MCF 10A (cell line): ENCODE measurements at regions of chr20 and their contacts with region 1.

Region 1: DNA sequence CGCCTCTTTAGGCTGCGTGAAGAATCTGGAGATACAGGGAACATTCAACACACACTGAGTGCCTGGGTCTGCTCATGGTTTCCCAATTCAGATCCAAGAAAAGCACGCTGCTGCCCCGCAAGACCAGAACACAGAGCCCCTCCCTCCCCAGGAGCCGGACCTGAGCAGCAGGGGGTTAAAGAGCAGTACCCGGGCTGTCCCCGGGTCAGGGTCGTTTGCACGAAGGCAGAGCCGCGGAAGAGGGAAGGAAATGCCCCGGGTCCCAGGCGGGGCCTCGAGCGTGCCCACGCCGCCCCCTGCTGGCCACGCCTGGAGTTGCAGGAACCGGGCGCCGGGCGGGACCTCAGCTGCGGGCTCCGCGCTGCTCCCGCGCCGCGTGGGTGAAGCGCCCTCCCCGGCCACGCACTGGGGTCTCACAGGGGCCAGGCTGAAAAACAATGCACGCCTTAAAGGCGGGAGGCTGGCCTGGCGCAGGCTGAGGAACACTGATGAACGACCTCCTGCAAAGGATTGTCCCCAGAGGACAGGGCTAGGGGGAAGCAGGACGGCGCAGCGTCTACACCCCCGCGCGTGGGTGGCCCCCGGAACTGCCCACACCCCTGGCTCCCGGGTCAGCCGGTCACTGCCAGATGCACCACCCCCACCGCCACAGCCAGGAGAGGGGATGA is 48.9 kb downstream of the ANKRD60 start:
- DNase-seq: peak; percentile 40
- H3K4me3 Mint-ChIP-seq: no peak overlapping the region
- H3K27ac Mint-ChIP-seq: no peak overlapping the region
- H3K4me1 Mint-ChIP-seq: no peaks in the 10 kb centered on the region
- H3K27me3 Mint-ChIP-seq: peaks cover 32% of the 10 kb centered on the region
- CTCF ChIP-seq: peak; percentile 99

Region 2: GRCh38 chr20:57748601-57749130 is 430.9 kb before region 1 on chr20:
- CTCF ChIA-PET with region 1: no interaction called
- POLR2A ChIA-PET with region 1: no interaction called
- intact Hi-C with region 1: no loop called
- DNase-seq: peak; percentile 90
- H3K4me3 Mint-ChIP-seq: peak overlapping the region; percentile 67
- H3K27ac Mint-ChIP-seq: peak overlapping the region; percentile 42
- H3K4me1 Mint-ChIP-seq: peaks cover 12% of the 10 kb centered on the region
- H3K27me3 Mint-ChIP-seq: no peaks in the 10 kb centered on the region
- CTCF ChIP-seq: no peak

Region 3: DNA sequence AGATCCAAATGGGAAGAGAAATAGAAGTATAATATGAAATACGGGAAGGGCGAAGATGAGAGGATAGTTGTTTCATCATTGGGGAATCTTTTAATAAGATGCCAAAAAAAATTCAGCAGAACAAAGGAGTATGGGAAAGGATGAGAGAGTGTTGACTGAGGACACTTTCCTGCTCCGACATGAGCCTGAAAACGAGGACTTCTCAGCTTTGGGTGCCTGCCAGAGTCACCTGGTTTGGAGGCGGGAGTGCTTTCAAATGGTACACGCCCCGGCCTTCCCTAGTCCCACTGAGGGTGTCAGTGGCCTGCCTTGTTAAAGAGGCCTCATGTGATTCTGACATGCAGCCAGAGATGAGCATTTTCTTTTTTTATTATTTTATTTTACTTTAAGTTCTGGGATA is 202.0 kb before region 1 on chr20:
- CTCF ChIA-PET with region 1: no interaction called
- POLR2A ChIA-PET with region 1: no interaction called
- intact Hi-C with region 1: no loop called
- DNase-seq: no peak
- H3K4me3 Mint-ChIP-seq: no peak overlapping the region
- H3K27ac Mint-ChIP-seq: no peak overlapping the region
- H3K4me1 Mint-ChIP-seq: no peaks in the 10 kb centered on the region
- H3K27me3 Mint-ChIP-seq: peaks cover 25% of the 10 kb centered on the region
- CTCF ChIP-seq: no peak

Region 4: DNA sequence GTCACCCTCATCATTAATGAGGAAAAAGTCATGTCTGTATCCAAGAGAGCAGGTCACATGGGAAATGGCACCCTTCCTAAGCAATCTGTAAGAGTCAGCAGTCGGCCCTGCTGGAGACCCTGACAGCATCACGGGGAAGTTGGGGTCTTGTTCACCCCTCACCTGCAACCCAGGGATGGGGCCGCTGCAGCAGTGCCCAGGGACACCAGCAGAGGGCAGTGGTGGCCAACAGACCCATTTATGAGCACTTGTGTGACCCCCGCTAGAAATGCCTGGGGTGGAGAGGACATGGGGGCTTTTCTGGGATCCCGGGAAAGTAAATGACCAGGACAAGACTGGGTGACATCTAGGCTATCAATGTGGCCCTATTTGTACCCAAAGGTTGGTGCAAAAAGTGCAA is 13.0 kb after region 1 on chr20:
- CTCF ChIA-PET with region 1: interaction called, 21 read pairs
- POLR2A ChIA-PET with region 1: no interaction called
- intact Hi-C with region 1: no loop called
- DNase-seq: peak; percentile 16
- H3K4me3 Mint-ChIP-seq: no peak overlapping the region
- H3K27ac Mint-ChIP-seq: no peak overlapping the region
- H3K4me1 Mint-ChIP-seq: no peaks in the 10 kb centered on the region
- H3K27me3 Mint-ChIP-seq: peaks cover 61% of the 10 kb centered on the region
- CTCF ChIP-seq: peak; percentile 65

Region 5: GRCh38 chr20:58393299-58393698 is 213.7 kb after region 1 on chr20:
- CTCF ChIA-PET with region 1: no interaction called
- POLR2A ChIA-PET with region 1: no interaction called
- intact Hi-C with region 1: no loop called
- DNase-seq: no peak
- H3K4me3 Mint-ChIP-seq: no peak overlapping the region
- H3K27ac Mint-ChIP-seq: no peak overlapping the region
- H3K4me1 Mint-ChIP-seq: peaks cover 31% of the 10 kb centered on the region
- H3K27me3 Mint-ChIP-seq: no peaks in the 10 kb centered on the region
- CTCF ChIP-seq: no peak